Panc1 (cell line): ENCODE measurements at regions of chr6 and their contacts with region 1.

Region 1: GRCh38 chr6:27694545-27694870 is 217.7 kb downstream of the OR2B2 start:
- DNase-seq: no peak
- ATAC-seq: no peak; the same call in 1 of the 2 replicates
- H3K4me3 ChIP-seq: peak overlapping the region; percentile 91 to 95
- H3K27ac ChIP-seq: peak overlapping the region; percentile 94
- H3K4me1 ChIP-seq: no peaks in the 10 kb centered on the region
- H3K27me3 ChIP-seq: no peaks in the 10 kb centered on the region
- CTCF ChIP-seq: no peak

Region 2: GRCh38 chr6:27922949-27923348 is 228.4 kb after region 1 on chr6:
- CTCF ChIA-PET with region 1: no interaction called
- POLR2A ChIA-PET with region 1: no interaction called
- in situ Hi-C with region 1: no loop called
- intact Hi-C with region 1: no loop called
- DNase-seq: no peak
- ATAC-seq: no peak
- H3K4me3 ChIP-seq: no peak overlapping the region
- H3K27ac ChIP-seq: no peak overlapping the region
- H3K4me1 ChIP-seq: no peaks in the 10 kb centered on the region
- H3K27me3 ChIP-seq: no peaks in the 10 kb centered on the region
- CTCF ChIP-seq: no peak

Region 3: GRCh38 chr6:28462401-28462800 is 767.9 kb after region 1 on chr6:
- CTCF ChIA-PET with region 1: no interaction called
- POLR2A ChIA-PET with region 1: interaction called, 19 read pairs
- in situ Hi-C with region 1: no loop called
- intact Hi-C with region 1: no loop called
- DNase-seq: no peak
- ATAC-seq: no peak
- H3K4me3 ChIP-seq: no peak overlapping the region
- H3K27ac ChIP-seq: no peak overlapping the region
- H3K4me1 ChIP-seq: no peaks in the 10 kb centered on the region
- H3K27me3 ChIP-seq: peaks cover 15% of the 10 kb centered on the region
- CTCF ChIP-seq: no peak